Activated CD4-positive, alpha-beta memory T cell treated with anti-CD3 and anti-CD28 coated beads for 36 hours (primary cell): ENCODE measurements at regions of chr7 and their contacts with region 1.

Region 1: DNA sequence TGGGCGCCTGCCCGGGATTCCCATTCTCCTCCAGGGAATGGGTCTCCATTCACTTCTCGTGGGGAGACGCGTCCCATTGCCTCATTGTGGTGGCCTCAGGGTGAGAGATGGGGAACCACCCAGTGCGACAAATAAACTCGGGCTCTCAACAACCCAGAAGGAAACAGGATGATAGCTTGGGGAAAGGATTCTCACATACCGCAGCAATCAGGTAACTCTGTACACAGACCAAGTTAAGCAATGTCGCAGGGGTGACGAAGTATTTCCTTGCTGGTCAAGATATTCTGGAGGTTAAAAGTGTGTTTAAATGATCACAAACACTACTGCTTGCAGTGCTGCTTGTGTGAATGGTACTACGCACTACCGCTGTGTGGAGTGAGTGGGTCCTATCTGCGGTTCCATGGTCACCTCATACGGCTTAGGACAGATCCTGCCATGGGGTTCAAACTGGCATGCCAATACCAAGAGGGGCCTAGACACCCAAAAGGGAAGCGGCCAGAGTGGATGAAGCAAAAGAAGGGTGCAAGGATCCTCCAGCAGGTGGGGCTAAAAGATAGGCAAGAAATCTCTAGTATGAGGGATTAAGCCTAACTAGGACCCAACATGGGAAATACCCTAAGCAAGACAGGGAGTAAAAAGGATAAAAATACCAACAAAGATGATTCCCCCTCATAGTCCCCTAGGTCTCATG is 143.8 kb upstream of the TMEM106B start:
- DNase-seq: peak; percentile 62
- H3K4me3 Mint-ChIP-seq: no peak overlapping the region
- H3K27ac Mint-ChIP-seq: no peak overlapping the region
- H3K4me1 Mint-ChIP-seq: peaks cover 14% of the 10 kb centered on the region
- H3K27me3 Mint-ChIP-seq: no peaks in the 10 kb centered on the region

Region 2: GRCh38 chr7:12080006-12080405 is 12.7 kb after region 1 on chr7:
- CTCF ChIA-PET with region 1: no interaction called
- POLR2A ChIA-PET with region 1: no interaction called
- intact Hi-C with region 1: no loop called
- DNase-seq: no peak
- H3K4me3 Mint-ChIP-seq: no peak overlapping the region
- H3K27ac Mint-ChIP-seq: no peak overlapping the region
- H3K4me1 Mint-ChIP-seq: no peaks in the 10 kb centered on the region
- H3K27me3 Mint-ChIP-seq: peaks cover 5% of the 10 kb centered on the region

Region 3: GRCh38 chr7:12291870-12292269 is 224.6 kb after region 1 on chr7:
- CTCF ChIA-PET with region 1: interaction called, 4 read pairs
- POLR2A ChIA-PET with region 1: no interaction called
- intact Hi-C with region 1: loop called (anchors 1 kb)
- DNase-seq: no peak
- H3K4me3 Mint-ChIP-seq: no peak overlapping the region
- H3K27ac Mint-ChIP-seq: no peak overlapping the region
- H3K4me1 Mint-ChIP-seq: no peaks in the 10 kb centered on the region
- H3K27me3 Mint-ChIP-seq: peaks cover 2% of the 10 kb centered on the region

Region 4: GRCh38 chr7:12389089-12389700 is 321.9 kb after region 1 on chr7:
- CTCF ChIA-PET with region 1: no interaction called
- POLR2A ChIA-PET with region 1: no interaction called
- intact Hi-C with region 1: loop called (anchors 2 kb)
- DNase-seq: peak; percentile 48
- H3K4me3 Mint-ChIP-seq: no peak overlapping the region
- H3K27ac Mint-ChIP-seq: no peak overlapping the region
- H3K4me1 Mint-ChIP-seq: no peaks in the 10 kb centered on the region
- H3K27me3 Mint-ChIP-seq: no peaks in the 10 kb centered on the region

Region 5: DNA sequence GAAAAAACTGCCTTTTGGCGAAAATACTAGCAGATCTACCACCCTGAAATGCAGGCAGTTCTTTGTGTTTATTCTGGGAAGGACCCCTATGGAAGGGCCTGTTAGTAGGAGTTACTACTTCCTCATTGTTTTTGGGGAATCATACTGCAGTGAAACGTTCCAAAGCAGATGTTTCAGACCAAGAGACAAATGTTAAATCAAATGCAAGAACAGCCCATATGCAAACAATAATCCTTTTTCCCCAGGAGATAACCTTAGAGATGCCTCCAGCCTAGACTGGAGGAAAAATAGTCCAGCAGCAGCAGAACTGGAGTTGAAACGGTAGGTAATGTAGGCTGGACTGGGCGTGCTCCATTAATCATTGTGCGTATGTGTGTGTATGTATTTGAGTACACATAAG is 402.3 kb after region 1 on chr7:
- CTCF ChIA-PET with region 1: no interaction called
- POLR2A ChIA-PET with region 1: no interaction called
- intact Hi-C with region 1: no loop called
- DNase-seq: no peak
- H3K4me3 Mint-ChIP-seq: no peak overlapping the region
- H3K27ac Mint-ChIP-seq: no peak overlapping the region
- H3K4me1 Mint-ChIP-seq: no peaks in the 10 kb centered on the region
- H3K27me3 Mint-ChIP-seq: no peaks in the 10 kb centered on the region